Left cardiac atrium (tissue), 4 donors: ENCODE measurements at regions of chr11 and their contacts with region 1.

Region 1: DNA sequence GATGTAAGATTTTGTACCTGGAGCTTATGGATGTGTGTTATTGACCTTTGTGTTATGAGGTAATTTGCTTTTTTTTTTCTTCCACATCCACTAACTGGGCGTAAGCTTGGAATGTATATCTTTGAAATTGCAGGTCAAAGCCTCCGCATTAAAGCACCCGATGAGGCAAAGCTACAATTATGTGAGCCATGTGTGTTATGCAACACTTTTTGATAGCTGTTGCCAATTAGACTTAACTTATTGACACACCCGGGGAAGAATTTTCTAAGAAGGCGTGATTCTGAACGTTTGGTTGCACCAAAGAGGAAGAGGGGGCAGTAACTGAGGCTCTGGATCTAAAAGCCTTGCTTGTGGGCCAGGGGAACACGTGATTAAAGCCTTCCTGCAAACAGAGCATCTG is 626 bp upstream of the TEX12 start:
- DNase-seq: no peak
- ATAC-seq: peak; percentile 35 to 55

Region 2: DNA sequence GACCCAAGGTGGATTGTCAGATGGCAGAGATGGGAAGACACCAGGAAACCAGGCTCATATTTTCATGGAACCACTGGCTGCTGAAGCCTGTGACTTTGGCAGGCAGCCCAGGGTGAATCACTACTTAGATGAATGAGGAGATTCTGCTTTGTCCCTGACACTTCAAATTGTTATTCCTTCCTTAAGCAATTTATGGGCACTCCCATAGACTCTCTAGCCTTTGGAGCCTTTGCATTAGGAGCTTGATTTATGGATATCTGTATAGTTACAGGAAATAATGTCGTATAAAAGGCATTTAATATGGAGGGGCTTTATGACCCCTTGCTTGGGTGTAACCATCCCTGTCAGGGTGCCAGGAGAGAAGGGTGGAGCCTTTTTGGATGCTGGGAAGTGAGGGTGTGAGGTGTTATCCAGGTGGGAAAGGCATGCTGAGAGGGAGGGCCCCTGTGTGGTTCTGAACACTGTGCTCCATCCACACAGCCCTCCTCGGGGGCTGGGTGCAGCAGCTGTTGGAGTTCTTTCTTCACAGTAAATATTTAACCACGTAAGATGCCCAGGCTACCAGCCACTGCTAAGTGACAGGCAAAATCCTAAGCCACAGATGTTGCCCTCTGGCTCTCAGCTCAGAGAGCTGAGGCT is 37.9 kb before region 1 on chr11:
- intact Hi-C with region 1: loop called in 1 of 2 experiments (anchors 5 kb)
- DNase-seq: peak; percentile 58
- ATAC-seq: peak; percentile 41 to 66